Thyroid gland (tissue), 4 donors: ENCODE measurements at regions of chr14 and their contacts with region 1.

Region 1: DNA sequence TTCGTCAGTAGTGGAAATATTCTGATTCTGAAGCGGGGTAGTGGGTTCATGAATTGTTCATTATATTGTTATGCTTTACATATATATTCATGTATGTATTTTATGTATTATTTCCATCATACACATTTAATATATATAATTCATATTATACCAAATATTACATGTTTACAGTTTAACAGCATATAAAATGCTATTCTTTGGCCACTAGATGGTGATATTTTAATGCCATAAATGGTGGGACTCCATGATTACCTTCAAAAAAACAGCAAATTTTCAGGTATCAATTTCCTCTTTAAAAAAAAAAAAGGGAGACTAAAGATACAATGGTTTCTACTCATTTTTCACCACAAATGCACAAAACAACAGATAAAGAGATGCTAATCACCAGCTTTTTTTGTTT is 41.0 kb downstream of the BDKRB1 start:
- DNase-seq: no peak
- H3K4me3 ChIP-seq: no peak overlapping the region
- H3K27ac ChIP-seq: no peak overlapping the region
- H3K4me1 ChIP-seq: no peaks in the 10 kb centered on the region
- H3K27me3 ChIP-seq: no peaks in the 10 kb centered on the region
- CTCF ChIP-seq: peak in 4 of 6 experiments; percentile 12 to 51 (median 42)
- POLR2A ChIP-seq: no peak

Region 2: GRCh38 chr14:96146131-96146806 is 150.7 kb before region 1 on chr14:
- intact Hi-C with region 1: no loop called
- DNase-seq: peak; percentile 71 to 84
- H3K4me3 ChIP-seq: no peak overlapping the region
- H3K27ac ChIP-seq: peak overlapping the region; percentile 66 to 86 (median 76)
- H3K4me1 ChIP-seq: peaks cover 8 to 11% of the 10 kb centered on the region in 2 donors
- H3K27me3 ChIP-seq: no peaks in the 10 kb centered on the region
- CTCF ChIP-seq: no peak
- POLR2A ChIP-seq: no peak

Region 3: GRCh38 chr14:96424109-96424989 is 127.3 kb after region 1 on chr14:
- intact Hi-C with region 1: loop called (anchors 5 kb)
- DNase-seq: peak; percentile 24 to 35
- H3K4me3 ChIP-seq: peak overlapping the region in 2 of 3 donors; percentile 4 to 12
- H3K27ac ChIP-seq: no peak overlapping the region
- H3K4me1 ChIP-seq: peaks cover 5 to 6% of the 10 kb centered on the region in 2 donors
- H3K27me3 ChIP-seq: no peaks in the 10 kb centered on the region
- CTCF ChIP-seq: peak; percentile 56 to 85 (median 77)
- POLR2A ChIP-seq: no peak